ENCODE measurements at regions of chr14 and their contacts with region 1.

Region 1: GRCh38 chr14:71753126-71753830 is 179.0 kb upstream of the RGS6 start:
- DNase-seq: peak; percentile 92
- H3K4me3 ChIP-seq: peak overlapping the region in 3 of 4 donors; percentile 4 to 13 (median 6)
- H3K27ac ChIP-seq: no peak overlapping the region
- H3K4me1 ChIP-seq: peaks cover 0 to 10% (median 8%) of the 10 kb centered on the region in 4 donors
- H3K27me3 ChIP-seq: no peaks in the 10 kb centered on the region
- CTCF ChIP-seq: peak; percentile 84 to 92 (median 85)
- EP300 ChIP-seq: no peak
- POLR2A ChIP-seq: no peak

Region 2: GRCh38 chr14:71138448-71139293 is 614.6 kb before region 1 on chr14:
- intact Hi-C with region 1: loop called (anchors 1 kb)
- DNase-seq: no peak
- H3K4me3 ChIP-seq: no peak overlapping the region
- H3K27ac ChIP-seq: no peak overlapping the region
- H3K4me1 ChIP-seq: peaks cover 0 to 13% (median 4%) of the 10 kb centered on the region in 4 donors
- H3K27me3 ChIP-seq: no peaks in the 10 kb centered on the region
- CTCF ChIP-seq: peak; percentile 77 to 95 (median 90)
- EP300 ChIP-seq: no peak
- POLR2A ChIP-seq: no peak

Region 3: DNA sequence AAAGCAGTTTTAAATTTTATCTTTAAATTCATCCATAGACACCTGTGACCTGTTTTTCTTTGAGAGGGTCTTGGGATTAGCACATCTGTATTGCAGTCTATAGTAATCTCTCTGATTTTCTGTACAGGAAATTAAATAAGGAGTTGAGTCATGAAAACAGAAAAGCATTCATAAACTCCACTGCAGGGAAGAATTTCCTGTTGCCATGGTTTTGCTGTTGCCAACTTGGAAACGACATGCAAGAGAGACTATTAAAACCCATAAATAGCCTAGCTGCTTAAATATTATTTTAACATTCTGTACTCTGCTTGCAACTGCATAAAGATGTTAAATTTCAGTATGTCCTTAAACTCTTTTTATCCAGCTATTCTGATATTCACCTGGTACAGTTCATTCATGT is 102.0 kb before region 1 on chr14:
- intact Hi-C with region 1: no loop called
- DNase-seq: no peak
- H3K4me3 ChIP-seq: no peak overlapping the region
- H3K27ac ChIP-seq: peak overlapping the region in 3 of 4 donors; percentile 27 to 50 (median 41)
- H3K4me1 ChIP-seq: peaks cover 0 to 16% (median 13%) of the 10 kb centered on the region in 4 donors
- H3K27me3 ChIP-seq: no peaks in the 10 kb centered on the region
- CTCF ChIP-seq: no peak
- EP300 ChIP-seq: no peak
- POLR2A ChIP-seq: no peak

Region 4: GRCh38 chr14:71803524-71804260 is 50.4 kb after region 1 on chr14:
- intact Hi-C with region 1: no loop called
- DNase-seq: no peak
- H3K4me3 ChIP-seq: no peak overlapping the region
- H3K27ac ChIP-seq: no peak overlapping the region
- H3K4me1 ChIP-seq: no peaks in the 10 kb centered on the region
- H3K27me3 ChIP-seq: no peaks in the 10 kb centered on the region
- CTCF ChIP-seq: no peak
- EP300 ChIP-seq: no peak
- POLR2A ChIP-seq: no peak

Region 5: DNA sequence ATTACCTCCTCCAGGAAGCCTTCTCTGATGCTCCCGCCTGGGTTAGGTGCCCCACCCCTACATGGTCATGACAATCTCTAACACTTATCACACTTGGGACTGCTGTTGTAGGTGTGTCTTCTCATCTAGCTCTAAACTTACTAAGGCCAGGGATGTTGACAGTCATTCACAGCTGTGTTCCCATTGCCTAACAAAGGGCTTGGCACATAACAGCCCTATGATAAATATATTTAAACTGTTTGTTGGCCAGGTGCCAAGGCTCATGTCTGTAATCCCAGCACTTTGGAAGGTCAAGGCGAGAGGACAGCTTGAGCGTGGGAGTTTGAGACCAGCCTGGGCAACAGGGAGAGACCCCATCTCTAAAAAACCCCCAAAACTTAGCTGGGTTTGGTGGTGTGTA is 80.2 kb after region 1 on chr14:
- intact Hi-C with region 1: no loop called
- DNase-seq: no peak
- H3K4me3 ChIP-seq: no peak overlapping the region
- H3K27ac ChIP-seq: no peak overlapping the region
- H3K4me1 ChIP-seq: no peaks in the 10 kb centered on the region
- H3K27me3 ChIP-seq: no peaks in the 10 kb centered on the region
- CTCF ChIP-seq: no peak
- EP300 ChIP-seq: no peak
- POLR2A ChIP-seq: no peak

Region 6: GRCh38 chr14:72457641-72458040 is 704.4 kb after region 1 on chr14:
- intact Hi-C with region 1: no loop called
- DNase-seq: no peak
- H3K4me3 ChIP-seq: no peak overlapping the region
- H3K27ac ChIP-seq: no peak overlapping the region
- H3K4me1 ChIP-seq: no peaks in the 10 kb centered on the region
- H3K27me3 ChIP-seq: no peaks in the 10 kb centered on the region
- CTCF ChIP-seq: no peak
- EP300 ChIP-seq: no peak
- POLR2A ChIP-seq: no peak

Measured in sigmoid colon (tissue), 7 donors.